ENCODE measurements at regions of chr3 and their contacts with region 1.

Region 1: DNA sequence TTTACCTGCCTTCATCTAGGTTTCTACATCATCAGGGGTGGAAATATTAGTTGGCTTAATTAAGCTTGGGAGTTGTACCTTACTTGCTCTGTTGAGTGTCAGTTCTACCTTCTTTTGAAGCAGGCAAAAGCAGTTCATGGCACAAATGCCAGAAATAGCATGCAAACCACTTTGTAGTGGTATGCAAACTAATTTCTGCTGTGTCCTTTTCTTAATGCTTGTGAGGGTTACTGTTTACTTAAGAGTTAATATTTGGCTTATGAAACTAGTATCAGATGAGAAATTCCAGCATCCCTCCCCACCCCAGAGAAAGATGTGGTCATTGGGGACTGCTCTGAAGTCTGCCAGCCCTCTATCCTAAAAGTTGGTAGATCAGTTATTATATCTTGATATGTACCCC is 7.1 kb downstream of the ATP2C1 start:
- DNase-seq: peak; percentile 39
- H3K4me3 Mint-ChIP-seq: peak overlapping the region; percentile 18
- H3K27ac Mint-ChIP-seq: peak overlapping the region; percentile 25
- H3K4me1 Mint-ChIP-seq: peaks cover 81% of the 10 kb centered on the region
- H3K27me3 Mint-ChIP-seq: no peaks in the 10 kb centered on the region
- CTCF ChIP-seq: no peak

Region 2: GRCh38 chr3:130746246-130747039 is 154.5 kb before region 1 on chr3 and contains the start of gene PIK3R4:
- CTCF ChIA-PET with region 1: no interaction called
- intact Hi-C with region 1: no loop called
- DNase-seq: peak; percentile 99
- H3K4me3 Mint-ChIP-seq: peak within 1 kb of the TSS; percentile 83
- H3K27ac Mint-ChIP-seq: peak within 1 kb of the TSS; percentile 94
- H3K4me1 Mint-ChIP-seq: peaks cover 24% of the 10 kb centered on the region
- H3K27me3 Mint-ChIP-seq: no peaks in the 10 kb centered on the region
- CTCF ChIP-seq: no peak
- total RNA-seq, gene PIK3R4: 42.6 and 47.3 TPM in 2 replicates

Region 3: DNA sequence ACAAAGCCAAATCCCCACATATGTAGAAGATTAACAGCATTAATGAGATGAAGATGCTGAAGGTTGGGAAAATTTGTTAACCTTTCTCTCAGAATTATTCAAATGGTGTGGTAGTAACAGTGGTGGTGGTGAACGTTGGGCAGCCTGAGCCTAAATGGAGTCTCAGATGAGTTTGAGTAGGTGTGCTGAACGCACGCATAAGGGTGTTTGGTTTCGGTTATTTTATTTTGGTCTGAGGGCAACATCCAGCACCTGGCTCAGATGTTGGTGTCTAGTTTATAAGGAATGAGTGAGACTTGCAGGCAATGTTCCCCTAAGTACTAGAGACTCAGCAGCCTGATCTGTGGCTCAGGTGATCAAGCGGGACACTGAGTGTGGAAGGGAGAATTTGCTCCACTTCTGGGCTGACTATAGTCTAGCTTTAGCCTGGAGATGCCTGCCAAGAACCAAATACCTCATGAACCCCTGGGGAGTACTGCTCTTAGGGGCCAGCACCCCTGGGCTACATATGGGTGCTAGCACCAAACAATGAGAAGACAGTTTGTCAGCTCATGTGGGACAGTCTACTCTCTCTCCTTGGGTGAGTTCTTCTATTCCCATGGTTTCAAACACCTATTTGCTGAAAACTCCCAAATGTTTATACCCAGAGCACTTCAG is 46.6 kb before region 1 on chr3:
- CTCF ChIA-PET with region 1: no interaction called
- intact Hi-C with region 1: no loop called
- DNase-seq: no peak
- H3K4me3 Mint-ChIP-seq: no peak overlapping the region
- H3K27ac Mint-ChIP-seq: no peak overlapping the region
- H3K4me1 Mint-ChIP-seq: peaks cover 84% of the 10 kb centered on the region
- H3K27me3 Mint-ChIP-seq: no peaks in the 10 kb centered on the region
- CTCF ChIP-seq: no peak

Region 4: DNA sequence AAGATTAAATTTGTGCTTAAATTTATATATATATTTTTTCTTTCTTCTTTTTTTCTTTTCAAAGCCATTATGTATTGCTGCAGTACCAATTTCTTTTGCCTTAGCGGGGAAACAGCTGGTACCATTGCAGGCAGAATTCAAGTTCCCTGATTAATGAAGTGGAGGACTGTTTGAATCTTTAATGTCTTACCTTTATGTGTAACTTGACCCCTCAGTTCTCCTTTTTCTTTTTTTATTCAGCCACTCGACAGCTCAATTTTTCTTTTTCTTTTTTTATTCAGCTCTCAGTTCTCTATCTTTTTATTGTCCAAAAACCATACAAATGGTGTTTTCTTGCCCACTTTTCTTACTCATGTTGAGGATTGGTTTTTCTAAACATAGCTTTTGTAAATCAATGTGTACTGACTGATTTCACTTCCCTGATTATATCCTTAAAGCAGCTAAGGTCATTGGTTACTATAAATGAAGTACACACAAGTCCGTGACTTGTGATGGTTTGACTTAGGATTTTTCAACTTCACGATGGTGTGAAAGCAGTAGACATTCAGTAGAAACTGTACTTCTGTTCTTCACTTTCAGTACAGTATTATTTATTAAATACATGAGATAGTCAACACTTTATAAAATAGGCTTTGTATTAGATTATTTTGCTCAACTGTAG is 15.7 kb after region 1 on chr3:
- CTCF ChIA-PET with region 1: no interaction called
- intact Hi-C with region 1: no loop called
- DNase-seq: no peak
- H3K4me3 Mint-ChIP-seq: no peak overlapping the region
- H3K27ac Mint-ChIP-seq: no peak overlapping the region
- H3K4me1 Mint-ChIP-seq: peaks cover 36% of the 10 kb centered on the region
- H3K27me3 Mint-ChIP-seq: no peaks in the 10 kb centered on the region
- CTCF ChIP-seq: no peak

Region 5: GRCh38 chr3:130935761-130936492 is 35.0 kb after region 1 on chr3:
- CTCF ChIA-PET with region 1: no interaction called
- intact Hi-C with region 1: loop called (anchors 5 kb)
- DNase-seq: no peak
- H3K4me3 Mint-ChIP-seq: no peak overlapping the region
- H3K27ac Mint-ChIP-seq: no peak overlapping the region
- H3K4me1 Mint-ChIP-seq: no peaks in the 10 kb centered on the region
- H3K27me3 Mint-ChIP-seq: no peaks in the 10 kb centered on the region
- CTCF ChIP-seq: no peak

Region 6: GRCh38 chr3:130963878-130964277 is 62.9 kb after region 1 on chr3:
- CTCF ChIA-PET with region 1: no interaction called
- intact Hi-C with region 1: loop called (anchors 1 kb)
- DNase-seq: peak; percentile 72
- H3K4me3 Mint-ChIP-seq: peak overlapping the region; percentile 5
- H3K27ac Mint-ChIP-seq: peak overlapping the region; percentile 94
- H3K4me1 Mint-ChIP-seq: peaks cover 62% of the 10 kb centered on the region
- H3K27me3 Mint-ChIP-seq: no peaks in the 10 kb centered on the region
- CTCF ChIP-seq: no peak